ENCODE measurements at regions of chr17 and their contacts with region 1.

Region 1: DNA sequence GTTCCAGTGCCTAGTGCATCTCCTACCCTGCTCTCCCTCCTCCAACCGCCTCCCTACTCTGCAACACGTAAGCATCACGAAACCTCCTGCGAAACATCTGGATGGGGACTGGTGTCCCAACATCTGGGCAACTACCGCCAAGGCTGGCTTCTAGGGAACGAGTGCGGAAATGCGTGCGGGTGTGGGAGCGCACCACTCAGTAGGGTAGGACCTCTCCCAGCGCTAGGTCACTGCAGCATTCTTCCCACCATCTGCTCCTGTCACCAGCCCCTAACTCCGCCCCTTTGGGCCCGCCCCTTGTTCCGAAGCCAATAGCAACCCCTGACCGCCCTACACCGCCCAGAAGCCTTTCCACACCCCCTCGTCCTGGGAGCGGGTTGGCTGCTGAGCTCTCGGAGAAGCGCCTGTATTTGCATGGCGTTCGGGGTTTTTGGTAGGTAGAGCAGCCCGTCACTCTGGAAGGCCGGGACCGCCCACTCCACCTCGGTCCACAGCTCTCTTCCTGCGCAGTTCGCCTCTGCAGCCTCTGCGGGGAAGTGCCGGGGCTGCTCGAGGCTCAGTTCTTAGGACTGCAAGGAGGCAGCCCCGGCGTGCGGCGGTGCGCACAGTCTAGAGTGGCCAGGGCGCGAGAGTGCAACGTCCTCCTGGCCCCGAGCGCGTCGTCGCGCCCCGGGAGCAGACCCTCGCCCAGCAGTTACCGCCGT is at the start of gene HS3ST3B1:
- DNase-seq: peak; percentile 95 to 99 (median 98)
- H3K4me3 ChIP-seq: peak within 1 kb of the TSS; percentile 34 to 73 (median 54)
- H3K4me3 Mint-ChIP-seq: peak within 1 kb of the TSS; percentile 95
- H3K27ac ChIP-seq: no peak within 1 kb of the TSS
- H3K27ac Mint-ChIP-seq: peak within 1 kb of the TSS; percentile 37 to 89 (median 78)
- H3K4me1 ChIP-seq: peaks cover 56 to 69% of the 10 kb centered on the region in 2 donors
- H3K4me1 Mint-ChIP-seq: peaks cover 65% of the 10 kb centered on the region
- H3K27me3 ChIP-seq: peaks cover 51 to 71% of the 10 kb centered on the region in 2 donors
- H3K27me3 Mint-ChIP-seq: peaks cover 73 to 84% (median 79%) of the 10 kb centered on the region in 3 donors
- CTCF ChIP-seq: no peak
- polyA plus RNA-seq, gene HS3ST3B1: 0.09 to 0.73 (median 0.32) TPM

Region 2: GRCh38 chr17:13337864-13338371 is 962.8 kb before region 1 on chr17:
- intact Hi-C with region 1: loop called in 1 of 2 experiments (anchors 5 kb)
- DNase-seq: peak in 1 of 3 donors; percentile 1
- H3K4me3 ChIP-seq: no peak overlapping the region
- H3K4me3 Mint-ChIP-seq: peak overlapping the region in 1 of 2 donors; percentile 60
- H3K27ac ChIP-seq: no peak overlapping the region
- H3K27ac Mint-ChIP-seq: no peak overlapping the region
- H3K4me1 ChIP-seq: no peaks in the 10 kb centered on the region
- H3K4me1 Mint-ChIP-seq: peaks cover 5% of the 10 kb centered on the region
- H3K27me3 ChIP-seq: peaks cover 4 to 7% of the 10 kb centered on the region in 2 donors
- H3K27me3 Mint-ChIP-seq: peaks cover 3 to 12% (median 5%) of the 10 kb centered on the region in 3 donors
- CTCF ChIP-seq: peak; percentile 60

Region 3: DNA sequence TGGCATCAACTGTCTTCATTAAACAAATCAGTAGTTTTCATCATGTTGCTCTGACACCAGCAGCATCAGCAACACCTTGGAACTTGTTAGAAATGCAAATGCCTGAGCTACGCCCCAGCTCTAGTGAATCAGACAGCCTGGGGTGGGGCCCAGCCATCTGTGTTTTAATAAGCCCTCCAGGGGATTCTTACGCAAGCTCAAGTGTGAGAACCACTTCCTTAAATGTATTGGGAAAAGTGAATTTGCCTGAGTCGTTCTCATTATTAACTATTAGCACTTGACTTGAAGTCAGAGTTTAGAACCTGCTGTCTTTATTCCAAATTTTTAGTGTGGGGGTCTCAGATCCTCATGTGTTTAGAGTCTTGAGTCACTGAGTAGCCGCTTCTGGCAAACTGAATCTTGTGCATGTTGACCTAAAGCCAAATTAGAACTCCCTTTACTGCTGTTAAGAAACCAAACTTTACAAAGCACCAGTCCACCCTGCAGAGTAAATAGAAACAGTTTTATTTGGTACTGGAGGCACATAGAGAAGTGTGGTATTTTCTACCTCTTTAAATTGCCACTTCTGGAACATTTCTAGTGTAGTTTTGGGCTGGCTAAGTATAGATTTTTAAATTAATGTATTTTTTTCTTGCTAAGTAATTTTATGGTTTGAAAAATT is 368.8 kb before region 1 on chr17:
- intact Hi-C with region 1: loop called (anchors 5 to 10 kb)
- DNase-seq: peak; percentile 89 to 98 (median 96)
- H3K4me3 ChIP-seq: peak overlapping the region in 1 of 3 experiments; percentile 37
- H3K4me3 Mint-ChIP-seq: peak overlapping the region in 1 of 2 donors; percentile 44
- H3K27ac ChIP-seq: peak overlapping the region; percentile 61 to 95
- H3K27ac Mint-ChIP-seq: peak overlapping the region; percentile 94 to 99 (median 98)
- H3K4me1 ChIP-seq: peaks cover 39% of the 10 kb centered on the region in 2 donors
- H3K4me1 Mint-ChIP-seq: peaks cover 39% of the 10 kb centered on the region
- H3K27me3 ChIP-seq: no peaks in the 10 kb centered on the region
- H3K27me3 Mint-ChIP-seq: no peaks in the 10 kb centered on the region
- CTCF ChIP-seq: no peak

Region 4: DNA sequence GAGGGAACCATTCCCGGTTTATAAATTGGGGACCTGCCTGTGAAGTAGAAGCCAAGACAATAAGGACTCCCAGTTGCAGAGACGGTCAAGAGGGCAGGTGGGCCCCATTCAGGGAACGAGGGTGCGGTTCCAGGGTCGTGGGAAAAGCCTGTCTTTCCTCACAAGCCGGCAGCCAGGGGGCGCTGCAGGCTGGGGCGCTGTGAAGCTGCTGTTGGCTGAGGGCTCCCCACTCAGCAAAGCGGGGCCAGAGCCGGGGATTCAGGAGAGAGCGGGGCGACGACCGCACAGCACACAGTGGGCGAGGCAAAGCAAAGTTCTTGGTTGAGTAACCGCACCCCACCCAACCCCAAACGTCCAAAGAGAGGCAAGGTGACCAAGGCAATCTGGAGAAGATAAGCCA is 88.9 kb before region 1 on chr17:
- intact Hi-C with region 1: loop called (anchors 5 to 10 kb)
- DNase-seq: peak; percentile 18 to 46 (median 20)
- H3K4me3 ChIP-seq: no peak overlapping the region
- H3K4me3 Mint-ChIP-seq: no peak overlapping the region
- H3K27ac ChIP-seq: no peak overlapping the region
- H3K27ac Mint-ChIP-seq: peak overlapping the region in 1 of 7 donors; percentile 22
- H3K4me1 ChIP-seq: no peaks in the 10 kb centered on the region
- H3K4me1 Mint-ChIP-seq: peaks cover 4% of the 10 kb centered on the region
- H3K27me3 ChIP-seq: no peaks in the 10 kb centered on the region
- H3K27me3 Mint-ChIP-seq: peaks cover 2% of the 10 kb centered on the region in 3 donors
- CTCF ChIP-seq: peak; percentile 61

Region 5: GRCh38 chr17:14276535-14277250 is 24.0 kb before region 1 on chr17:
- intact Hi-C with region 1: no loop called
- DNase-seq: no peak
- H3K4me3 ChIP-seq: no peak overlapping the region
- H3K4me3 Mint-ChIP-seq: no peak overlapping the region
- H3K27ac ChIP-seq: no peak overlapping the region
- H3K27ac Mint-ChIP-seq: no peak overlapping the region
- H3K4me1 ChIP-seq: no peaks in the 10 kb centered on the region
- H3K4me1 Mint-ChIP-seq: no peaks in the 10 kb centered on the region
- H3K27me3 ChIP-seq: no peaks in the 10 kb centered on the region
- H3K27me3 Mint-ChIP-seq: peaks cover 0 to 4% (median 0%) of the 10 kb centered on the region in 3 donors
- CTCF ChIP-seq: no peak

Region 6: DNA sequence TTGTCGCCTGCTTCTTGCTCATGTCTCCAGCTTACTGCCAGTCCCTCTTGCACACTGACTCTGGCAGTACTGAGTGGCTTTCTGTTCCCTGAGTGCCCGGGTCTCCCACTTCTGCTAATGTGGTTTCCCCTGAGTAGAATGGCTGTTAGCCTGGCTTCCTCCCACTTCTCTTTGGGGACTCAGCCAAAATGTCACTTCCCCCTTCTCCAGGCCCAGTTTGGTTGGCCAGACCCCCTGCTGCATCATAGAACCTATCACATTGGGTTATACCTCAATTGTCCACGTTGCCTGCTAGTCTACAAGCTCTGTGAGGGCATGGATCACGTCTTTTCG is 304.5 kb after region 1 on chr17:
- intact Hi-C with region 1: loop called in 1 of 2 experiments (anchors 5 kb)
- DNase-seq: peak; percentile 88 to 93 (median 90)
- H3K4me3 ChIP-seq: peak overlapping the region; percentile 36 to 86 (median 75)
- H3K4me3 Mint-ChIP-seq: peak overlapping the region; percentile 75 to 93
- H3K27ac ChIP-seq: peak overlapping the region; percentile 79 to 95
- H3K27ac Mint-ChIP-seq: peak overlapping the region; percentile 94 to 99 (median 98)
- H3K4me1 ChIP-seq: peaks cover 16 to 24% of the 10 kb centered on the region in 2 donors
- H3K4me1 Mint-ChIP-seq: peaks cover 26% of the 10 kb centered on the region
- H3K27me3 ChIP-seq: no peaks in the 10 kb centered on the region
- H3K27me3 Mint-ChIP-seq: peaks cover 0 to 1% (median 0%) of the 10 kb centered on the region in 3 donors
- CTCF ChIP-seq: no peak

Region 7: GRCh38 chr17:14748031-14748710 is 447.4 kb after region 1 on chr17:
- intact Hi-C with region 1: loop called in 1 of 2 experiments (anchors 10 kb)
- DNase-seq: peak; percentile 49 to 78 (median 67)
- H3K4me3 ChIP-seq: no peak overlapping the region
- H3K4me3 Mint-ChIP-seq: no peak overlapping the region
- H3K27ac ChIP-seq: no peak overlapping the region
- H3K27ac Mint-ChIP-seq: peak overlapping the region in 6 of 7 donors; percentile 8 to 88 (median 52)
- H3K4me1 ChIP-seq: peaks cover 35 to 48% of the 10 kb centered on the region in 2 donors
- H3K4me1 Mint-ChIP-seq: peaks cover 44% of the 10 kb centered on the region
- H3K27me3 ChIP-seq: no peaks in the 10 kb centered on the region
- H3K27me3 Mint-ChIP-seq: peaks cover 0 to 6% (median 0%) of the 10 kb centered on the region in 3 donors
- CTCF ChIP-seq: no peak

Measured in CD14-positive monocyte (primary cell).